ENCODE measurements at regions of chr4 and their contacts with region 1.

Region 1: DNA sequence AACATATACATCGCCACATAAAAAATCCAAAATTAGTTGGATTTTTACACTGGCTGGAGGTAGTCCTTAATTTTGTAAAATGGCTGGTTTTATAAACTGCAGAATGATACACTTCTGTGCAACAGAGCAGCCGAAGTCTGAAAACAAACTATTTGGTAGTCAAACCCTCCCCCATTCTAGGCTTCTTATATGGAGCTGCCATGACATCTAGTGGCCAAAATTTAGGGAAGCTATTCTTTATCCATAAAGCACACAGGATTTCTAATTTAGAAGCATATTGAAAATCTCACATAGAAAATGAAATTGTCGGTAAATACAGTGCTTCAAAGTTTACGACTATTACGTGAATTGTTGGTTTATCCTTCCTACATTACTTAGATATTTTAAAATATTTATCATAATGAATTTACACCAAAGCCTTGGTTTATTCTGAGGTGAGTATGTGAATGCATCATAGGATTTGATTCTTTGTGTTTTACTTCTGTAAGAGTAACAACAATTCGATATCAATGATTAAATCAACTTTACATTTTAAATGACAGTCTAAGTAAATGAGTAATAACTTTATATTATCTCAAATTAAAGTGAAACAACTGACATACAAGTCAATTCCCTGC is 113.4 kb upstream of the FAM241A start:
- DNase-seq: peak; percentile 25
- ATAC-seq: peak; percentile 72
- H3K4me3 ChIP-seq: no peak overlapping the region
- H3K27ac ChIP-seq: no peak overlapping the region
- H3K4me1 ChIP-seq: no peaks in the 10 kb centered on the region
- H3K27me3 ChIP-seq: no peaks in the 10 kb centered on the region
- CTCF ChIP-seq: peak; percentile 73
- EP300 ChIP-seq: no peak
- POLR2A ChIP-seq: no peak
- RAD21 ChIP-seq: peak; percentile 54

Region 2: GRCh38 chr4:111154934-111155333 is 876.9 kb before region 1 on chr4:
- CTCF ChIA-PET with region 1: no interaction called
- POLR2A ChIA-PET with region 1: no interaction called
- in situ Hi-C with region 1: no loop called
- intact Hi-C with region 1: loop called (anchors 5 kb)
- DNase-seq: no peak
- ATAC-seq: no peak
- H3K4me3 ChIP-seq: no peak overlapping the region
- H3K27ac ChIP-seq: no peak overlapping the region
- H3K4me1 ChIP-seq: no peaks in the 10 kb centered on the region
- H3K27me3 ChIP-seq: no peaks in the 10 kb centered on the region
- CTCF ChIP-seq: no peak
- EP300 ChIP-seq: no peak
- POLR2A ChIP-seq: no peak
- RAD21 ChIP-seq: no peak

Region 3: GRCh38 chr4:111847296-111848077 is 184.3 kb before region 1 on chr4:
- CTCF ChIA-PET with region 1: no interaction called
- POLR2A ChIA-PET with region 1: no interaction called
- in situ Hi-C with region 1: no loop called
- intact Hi-C with region 1: loop called (anchors 2 kb)
- DNase-seq: peak; percentile 6
- ATAC-seq: peak; percentile 84
- H3K4me3 ChIP-seq: no peak overlapping the region
- H3K27ac ChIP-seq: no peak overlapping the region
- H3K4me1 ChIP-seq: no peaks in the 10 kb centered on the region
- H3K27me3 ChIP-seq: no peaks in the 10 kb centered on the region
- CTCF ChIP-seq: 0 out of 2 replicates have a peak, but pooled peaks have one; percentile 20
- EP300 ChIP-seq: no peak
- POLR2A ChIP-seq: no peak
- RAD21 ChIP-seq: no peak

Region 4: DNA sequence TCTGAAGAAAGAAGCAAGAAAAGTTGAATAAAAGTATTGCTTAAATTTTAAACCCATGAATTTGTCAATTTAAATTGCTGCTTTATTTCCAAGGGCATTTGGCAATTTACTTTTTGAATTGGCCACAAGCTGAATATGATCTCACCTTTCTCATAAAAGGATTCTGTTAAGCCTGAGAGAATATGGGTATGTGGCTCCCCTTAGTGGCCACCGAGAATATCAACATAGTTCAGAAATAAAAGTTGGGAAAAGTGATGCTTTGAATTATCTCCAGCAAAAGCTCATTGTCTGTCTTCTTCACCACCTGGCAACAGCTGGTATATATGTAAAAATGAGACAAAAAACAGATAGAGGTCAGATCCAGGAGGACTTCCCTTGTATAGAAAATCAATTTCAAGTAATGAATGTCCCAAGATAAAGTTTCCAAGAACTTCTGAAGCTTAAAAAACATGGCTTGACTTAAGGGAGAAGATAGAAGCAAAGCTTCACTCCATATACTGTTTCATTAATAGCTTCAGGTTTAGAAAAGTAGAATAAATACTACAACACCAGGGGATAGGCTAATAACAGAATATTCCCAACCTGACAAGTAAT is 177.2 kb before region 1 on chr4:
- CTCF ChIA-PET with region 1: no interaction called
- POLR2A ChIA-PET with region 1: no interaction called
- in situ Hi-C with region 1: no loop called
- intact Hi-C with region 1: loop called (anchors 2 kb)
- DNase-seq: peak; percentile 10
- ATAC-seq: peak; percentile 78
- H3K4me3 ChIP-seq: no peak overlapping the region
- H3K27ac ChIP-seq: no peak overlapping the region
- H3K4me1 ChIP-seq: no peaks in the 10 kb centered on the region
- H3K27me3 ChIP-seq: no peaks in the 10 kb centered on the region; a peak in 1 of 5 replicates
- CTCF ChIP-seq: peak; percentile 66
- EP300 ChIP-seq: no peak
- POLR2A ChIP-seq: no peak
- RAD21 ChIP-seq: peak; percentile 28; the same call in 1 of the 2 replicates

Region 5: GRCh38 chr4:111943795-111944203 is 88.0 kb before region 1 on chr4:
- CTCF ChIA-PET with region 1: no interaction called
- POLR2A ChIA-PET with region 1: no interaction called
- in situ Hi-C with region 1: no loop called
- intact Hi-C with region 1: loop called (anchors 5 kb)
- DNase-seq: peak; percentile 28
- ATAC-seq: peak; percentile 95
- H3K4me3 ChIP-seq: no peak overlapping the region
- H3K27ac ChIP-seq: no peak overlapping the region
- H3K4me1 ChIP-seq: no peaks in the 10 kb centered on the region
- H3K27me3 ChIP-seq: no peaks in the 10 kb centered on the region
- CTCF ChIP-seq: peak; percentile 54
- EP300 ChIP-seq: no peak
- POLR2A ChIP-seq: no peak
- RAD21 ChIP-seq: no peak

Region 6: GRCh38 chr4:112170451-112170993 is 138.7 kb after region 1 on chr4:
- CTCF ChIA-PET with region 1: no interaction called
- POLR2A ChIA-PET with region 1: no interaction called
- in situ Hi-C with region 1: no loop called
- intact Hi-C with region 1: no loop called
- DNase-seq: peak; percentile 43
- ATAC-seq: no peak
- H3K4me3 ChIP-seq: no peak overlapping the region
- H3K27ac ChIP-seq: no peak overlapping the region
- H3K4me1 ChIP-seq: no peaks in the 10 kb centered on the region
- H3K27me3 ChIP-seq: no peaks in the 10 kb centered on the region; a peak in 1 of 5 replicates
- CTCF ChIP-seq: no peak
- EP300 ChIP-seq: no peak
- POLR2A ChIP-seq: no peak
- RAD21 ChIP-seq: no peak

Region 7: GRCh38 chr4:112951362-112952312 is 919.8 kb after region 1 on chr4:
- CTCF ChIA-PET with region 1: no interaction called
- POLR2A ChIA-PET with region 1: no interaction called
- in situ Hi-C with region 1: no loop called
- intact Hi-C with region 1: no loop called
- DNase-seq: peak; percentile 9
- ATAC-seq: no peak
- H3K4me3 ChIP-seq: no peak overlapping the region
- H3K27ac ChIP-seq: no peak overlapping the region
- H3K4me1 ChIP-seq: no peaks in the 10 kb centered on the region
- H3K27me3 ChIP-seq: no peaks in the 10 kb centered on the region
- CTCF ChIP-seq: peak; percentile 16; the same call in 1 of the 2 replicates
- EP300 ChIP-seq: no peak
- POLR2A ChIP-seq: no peak
- RAD21 ChIP-seq: no peak